ENCODE measurements at regions of chr2 and their contacts with region 1.

Region 1: DNA sequence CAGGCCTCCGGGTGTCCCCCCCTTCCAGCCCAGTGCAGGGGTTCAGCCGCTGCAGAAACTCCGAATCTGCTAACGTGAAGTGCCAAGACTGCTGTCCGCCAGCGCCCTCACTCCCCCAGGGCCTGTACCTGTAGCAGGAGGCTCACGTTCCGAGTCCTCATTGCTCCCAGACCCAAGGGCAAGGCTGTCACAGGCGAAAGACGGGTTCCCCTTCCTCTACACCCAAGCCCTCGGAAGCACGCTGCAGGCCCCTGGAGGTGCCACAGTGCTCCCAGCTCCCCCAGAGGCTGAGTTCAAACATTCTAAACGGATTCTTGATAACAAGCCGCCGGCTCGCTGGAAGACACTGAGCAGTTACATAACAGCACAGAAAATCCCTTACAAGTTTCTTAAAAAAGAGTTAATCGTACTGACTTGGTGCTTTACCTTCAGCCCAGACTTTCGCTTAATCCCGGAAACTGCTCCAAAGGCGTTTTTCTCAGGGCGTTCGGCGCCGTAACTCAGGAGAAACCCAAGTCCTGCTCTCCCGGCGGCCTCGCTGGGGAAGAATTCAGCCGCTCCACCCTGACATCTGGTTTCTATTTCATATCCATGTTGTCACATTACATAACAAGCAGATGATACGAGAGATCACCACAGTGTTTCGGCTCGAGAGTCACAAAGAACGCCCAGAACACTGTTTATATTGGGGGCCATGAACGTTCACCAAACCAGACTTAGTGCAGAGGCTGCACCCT is 92.0 kb downstream of the HDAC4 start:
- DNase-seq: no peak
- ATAC-seq: peak; percentile 52

Region 2: DNA sequence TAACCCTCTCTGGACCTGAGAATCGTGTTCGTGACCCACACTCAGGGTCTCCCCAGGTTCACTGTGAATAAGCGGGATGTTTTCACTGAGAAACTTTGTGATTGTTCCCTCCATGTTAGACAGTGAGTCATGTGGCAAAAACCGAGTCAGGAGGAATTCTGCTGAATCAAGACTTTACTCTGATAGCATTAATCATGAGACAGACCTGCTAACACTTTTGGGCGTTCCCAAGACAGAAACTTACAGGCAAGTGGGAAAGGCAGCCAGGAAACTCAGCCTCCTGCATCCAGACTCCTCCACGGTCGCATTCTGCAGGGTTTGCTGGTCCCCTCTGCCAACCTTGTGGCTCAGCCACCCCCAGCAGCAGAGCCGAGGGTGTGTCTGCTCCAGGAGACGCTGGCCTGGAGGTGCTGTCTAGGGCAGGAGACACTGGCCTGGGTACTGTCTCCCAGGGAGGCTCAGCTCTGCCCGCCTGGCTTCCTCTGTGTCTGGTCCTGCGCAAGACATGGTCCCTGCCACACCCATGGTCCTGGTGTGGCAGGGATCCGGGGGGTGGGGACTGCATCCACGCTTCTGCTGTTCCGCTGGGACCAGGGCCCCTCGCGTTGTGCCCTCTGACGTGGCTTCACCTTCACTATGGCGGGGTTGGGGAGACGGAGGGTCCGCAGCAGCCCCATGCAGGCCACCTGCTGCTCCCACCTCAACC is 283.6 kb before region 1 on chr2:
- intact Hi-C with region 1: no loop called
- DNase-seq: no peak
- ATAC-seq: no peak

Region 3: GRCh38 chr2:239225871-239226561 is 82.8 kb before region 1 on chr2:
- intact Hi-C with region 1: loop called (anchors 5 kb)
- DNase-seq: no peak
- ATAC-seq: no peak

Region 4: DNA sequence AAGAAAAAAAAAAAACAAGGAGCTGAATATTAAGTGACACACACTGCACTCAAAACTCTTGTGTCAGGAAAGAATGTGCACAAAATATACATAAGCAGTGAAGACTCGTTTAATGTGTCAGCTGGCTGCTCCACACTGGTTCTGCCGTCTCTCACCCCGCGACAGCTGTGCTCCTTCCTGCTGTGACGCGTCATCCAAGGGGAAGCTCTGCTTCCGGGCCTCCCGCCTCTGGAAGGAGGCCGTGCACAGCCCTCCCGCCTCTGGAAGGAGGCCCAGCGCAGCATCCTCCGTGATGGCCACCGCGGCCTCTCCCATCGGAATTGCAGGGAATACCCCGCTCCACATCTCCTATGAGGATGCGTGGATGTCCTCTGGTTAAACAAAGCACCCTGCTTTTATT is 59.1 kb before region 1 on chr2:
- intact Hi-C with region 1: loop called (anchors 5 kb)
- DNase-seq: peak; percentile 89
- ATAC-seq: peak; percentile 68

Region 5: DNA sequence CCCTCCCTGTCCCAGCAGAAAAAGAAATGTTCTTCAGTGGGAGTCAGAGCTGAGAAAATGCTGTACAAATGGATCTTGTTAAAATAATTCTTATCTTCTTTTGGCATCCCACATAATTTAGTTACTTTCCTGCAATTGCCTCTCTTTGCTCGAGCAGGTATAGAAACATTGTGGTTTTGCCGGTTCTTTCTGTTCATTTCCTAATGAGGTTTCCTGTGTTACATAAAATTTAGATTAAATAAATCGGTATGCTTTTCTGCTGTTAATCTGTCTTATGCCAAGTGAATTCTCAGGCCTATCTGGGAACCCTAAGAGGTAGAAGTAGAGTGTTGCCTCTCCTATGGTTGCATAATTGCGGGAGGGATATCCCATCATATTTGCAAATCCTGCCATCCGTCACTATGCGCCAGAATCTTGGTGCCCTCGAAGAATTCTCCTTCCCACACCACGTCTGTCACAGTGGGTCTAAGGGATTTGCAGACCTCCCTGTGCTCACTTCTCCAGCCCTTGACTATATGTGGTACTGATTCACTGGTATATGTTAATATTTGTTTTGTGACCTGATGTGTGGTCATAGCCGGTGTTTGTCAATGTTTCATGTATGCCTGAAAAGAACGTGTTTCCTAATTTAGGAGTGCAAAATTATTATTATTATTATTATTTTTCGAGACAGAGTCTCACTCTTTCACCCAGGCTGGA is 104.2 kb after region 1 on chr2:
- intact Hi-C with region 1: no loop called
- DNase-seq: no peak
- ATAC-seq: no peak